Common myeloid progenitor, CD34-positive (primary cell): ENCODE measurements at regions of chr11 and their contacts with region 1.

Region 1: DNA sequence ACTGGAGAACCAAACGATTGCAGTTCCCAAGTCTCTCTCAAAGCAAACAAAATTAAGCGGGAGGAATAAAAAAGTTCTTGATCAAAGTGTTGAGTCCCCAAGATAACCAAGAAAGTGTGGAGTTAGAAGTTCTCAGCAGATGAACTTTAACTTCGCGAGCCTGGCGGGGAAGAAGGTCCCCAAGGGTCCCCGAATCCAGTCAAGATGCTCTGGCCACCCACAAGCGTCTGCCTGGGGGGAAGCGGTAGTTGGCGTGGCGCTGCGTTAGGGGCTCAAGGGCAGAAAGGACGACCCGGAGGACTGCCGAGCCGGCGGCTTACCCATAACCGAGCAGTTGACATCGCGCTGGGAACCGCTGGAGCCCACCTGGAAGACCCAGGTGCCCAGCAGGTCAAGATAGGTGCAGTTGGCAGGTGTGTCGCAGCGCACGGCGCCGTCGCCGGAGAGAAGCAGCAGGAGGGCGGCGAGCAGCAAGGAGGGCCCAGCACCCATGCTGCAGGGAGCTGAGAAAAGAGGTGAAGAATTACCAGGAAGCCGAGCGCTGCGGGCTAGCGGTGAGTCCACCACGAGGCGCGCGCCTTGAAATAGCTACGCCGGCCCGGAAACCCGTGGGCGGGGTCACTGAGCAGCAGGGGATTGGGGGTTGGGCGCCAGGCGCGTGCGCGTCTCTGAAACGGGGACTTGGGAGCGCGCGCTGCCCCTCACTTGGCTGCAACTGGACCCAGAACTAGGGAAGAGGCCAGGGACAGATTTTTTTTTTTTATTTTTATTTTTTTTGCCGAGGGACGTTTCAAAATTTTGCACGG is at the start of gene CTSC:
- DNase-seq: peak; percentile 88 to 96 (median 94)
- H3K4me3 ChIP-seq: peak within 1 kb of the TSS; percentile 71 to 98 (median 92)
- H3K27ac ChIP-seq: peak within 1 kb of the TSS; percentile 66 to 90
- H3K4me1 ChIP-seq: peaks cover 4 to 54% (median 26%) of the 10 kb centered on the region in 4 experiments
- H3K27me3 ChIP-seq: no peaks in the 10 kb centered on the region

Region 2: GRCh38 chr11:88246696-88247095 is 90.7 kb before region 1 on chr11:
- CTCF ChIA-PET with region 1: no interaction called
- POLR2A ChIA-PET with region 1: no interaction called
- DNase-seq: no peak
- H3K4me3 ChIP-seq: no peak overlapping the region
- H3K27ac ChIP-seq: no peak overlapping the region
- H3K4me1 ChIP-seq: no peaks in the 10 kb centered on the region
- H3K27me3 ChIP-seq: no peaks in the 10 kb centered on the region

Region 3: DNA sequence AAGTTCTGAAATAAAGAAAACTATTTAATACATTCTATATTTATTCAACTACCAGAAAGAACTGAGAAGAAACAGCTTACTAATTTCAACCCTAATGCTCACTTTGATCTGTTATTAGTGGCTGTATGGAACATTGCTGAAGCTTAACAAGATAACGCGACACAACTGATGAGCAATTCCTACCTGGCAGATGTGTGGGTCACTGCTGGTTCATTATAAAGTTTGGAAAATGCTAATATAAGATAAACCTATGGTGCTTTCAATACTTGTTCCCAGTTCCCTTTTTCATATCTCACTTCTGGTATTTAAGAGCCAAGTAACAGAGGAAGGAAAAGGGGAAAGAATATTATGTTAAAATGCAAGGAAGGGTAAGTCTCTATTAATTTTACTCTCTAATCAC is 10.3 kb before region 1 on chr11:
- CTCF ChIA-PET with region 1: interaction called, 12 read pairs
- POLR2A ChIA-PET with region 1: no interaction called
- DNase-seq: no peak
- H3K4me3 ChIP-seq: no peak overlapping the region
- H3K27ac ChIP-seq: no peak overlapping the region
- H3K4me1 ChIP-seq: peaks cover 0 to 26% (median 12%) of the 10 kb centered on the region in 4 experiments
- H3K27me3 ChIP-seq: no peaks in the 10 kb centered on the region